ENCODE measurements at regions of chr2 and their contacts with region 1.

Region 1: GRCh38 chr2:118046634-118047210 is 32.9 kb upstream of the CCDC93 start:
- DNase-seq: no peak
- H3K4me3 ChIP-seq: no peak overlapping the region
- H3K27me3 ChIP-seq: peaks cover 2% of the 10 kb centered on the region; the same call in 1 of the 2 replicates
- CTCF ChIP-seq: peak; percentile 59

Region 2: DNA sequence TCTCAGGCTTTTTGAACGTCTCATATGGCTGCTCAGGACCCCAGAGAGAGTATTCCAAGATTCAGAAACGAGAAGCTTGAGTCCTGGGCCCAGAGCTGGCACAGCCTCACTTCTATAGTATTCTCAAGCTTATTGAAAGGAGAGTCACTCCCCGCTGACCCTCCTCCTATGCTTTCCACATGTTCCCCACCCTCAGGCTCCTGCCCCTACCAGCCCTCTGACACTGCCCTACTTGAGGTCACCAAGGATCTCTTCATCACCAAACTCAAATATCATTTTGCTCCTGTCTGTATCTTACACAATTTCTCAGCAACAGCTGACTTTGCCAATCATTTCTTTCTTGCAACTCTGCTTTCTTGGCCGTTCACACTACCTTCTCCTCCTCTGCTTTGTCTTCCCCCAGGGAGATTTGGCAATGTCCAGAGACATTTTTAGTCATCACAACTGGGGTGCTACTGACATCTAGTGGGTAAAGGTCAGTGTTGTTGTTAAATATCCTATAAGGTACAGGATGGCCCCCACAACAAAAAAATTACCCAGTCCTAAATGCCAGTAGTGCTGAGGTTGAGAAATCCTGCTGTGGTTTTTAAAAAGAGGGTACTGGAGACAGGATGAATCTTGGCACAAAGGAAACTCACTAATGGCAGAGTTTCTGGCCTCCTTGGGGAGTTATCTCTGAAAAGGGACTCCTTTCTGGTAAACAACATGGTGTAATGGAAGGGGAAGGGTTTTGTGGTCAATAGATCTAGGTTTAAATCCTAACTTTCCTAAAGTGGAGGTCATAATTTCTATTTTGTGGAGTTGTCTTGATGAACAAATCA is 14.6 kb after region 1 on chr2:
- CTCF ChIA-PET with region 1: interaction called, 95 read pairs
- POLR2A ChIA-PET with region 1: no interaction called
- DNase-seq: no peak
- H3K4me3 ChIP-seq: no peak overlapping the region
- H3K27me3 ChIP-seq: no peaks in the 10 kb centered on the region
- CTCF ChIP-seq: peak; percentile 55

Region 3: GRCh38 chr2:118202707-118203303 is 156.1 kb after region 1 on chr2:
- CTCF ChIA-PET with region 1: interaction called, 10 read pairs
- POLR2A ChIA-PET with region 1: no interaction called
- DNase-seq: no peak
- H3K4me3 ChIP-seq: no peak overlapping the region
- H3K27me3 ChIP-seq: peaks cover 2% of the 10 kb centered on the region
- CTCF ChIP-seq: peak; percentile 92

Region 4: GRCh38 chr2:118265873-118266455 is 219.2 kb after region 1 on chr2:
- CTCF ChIA-PET with region 1: no interaction called
- POLR2A ChIA-PET with region 1: no interaction called
- DNase-seq: no peak
- H3K4me3 ChIP-seq: no peak overlapping the region
- H3K27me3 ChIP-seq: no peaks in the 10 kb centered on the region
- CTCF ChIP-seq: no peak

Measured in BJ (cell line).